GM12878 (cell line): ENCODE measurements at regions of chr7 and their contacts with region 1.

Region 1: DNA sequence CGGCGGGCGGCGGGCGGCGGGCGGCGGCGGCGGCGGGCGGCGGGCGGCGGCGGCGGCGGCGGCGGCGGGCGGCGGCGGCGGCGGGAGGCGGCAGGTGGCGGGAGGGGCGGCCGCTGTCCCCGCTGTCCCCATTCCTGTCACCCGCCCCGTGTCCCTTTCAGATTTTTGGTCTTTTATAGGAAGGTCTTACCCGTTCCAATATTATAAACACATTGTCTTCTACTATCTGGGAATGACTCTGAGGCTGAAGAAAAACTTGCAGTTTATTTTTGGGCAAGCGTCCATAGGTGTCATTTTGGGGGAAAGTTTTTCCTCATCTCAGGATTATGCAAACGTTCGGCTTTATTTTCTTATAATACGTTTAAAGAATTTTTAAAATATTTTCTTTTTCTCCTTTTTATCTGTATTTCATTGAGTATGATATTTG is 578 bp downstream of the ZNF713 start:
- DNase-seq: no peak
- ATAC-seq: no peak
- H3K4me3 ChIP-seq: peak overlapping the region; percentile 57; the same call in 1 of the 2 replicates
- H3K27ac ChIP-seq: no peak overlapping the region
- H3K4me1 ChIP-seq: no peaks in the 10 kb centered on the region
- H3K27me3 ChIP-seq: no peaks in the 10 kb centered on the region
- CTCF ChIP-seq: no peak
- EP300 ChIP-seq: no peak
- POLR2A ChIP-seq: no peak
- RAD21 ChIP-seq: no peak

Region 2: GRCh38 chr7:54758702-54759592 is 1128.9 kb before region 1 on chr7 and contains the start of gene SEC61G:
- CTCF ChIA-PET with region 1: no interaction called
- POLR2A ChIA-PET with region 1: no interaction called
- RAD21 ChIA-PET with region 1: no interaction called
- SMC1A ChIA-PET with region 1: no interaction called
- in situ Hi-C with region 1: loop called (anchors 25 kb)
- intact Hi-C with region 1: no loop called
- DNase-seq: peak; percentile 90
- ATAC-seq: peak; percentile 96
- H3K4me3 ChIP-seq: peak within 1 kb of the TSS; percentile 97
- H3K27ac ChIP-seq: peak within 1 kb of the TSS; percentile 78
- H3K4me1 ChIP-seq: no peaks in the 10 kb centered on the region
- H3K27me3 ChIP-seq: no peaks in the 10 kb centered on the region
- CTCF ChIP-seq: no peak
- EP300 ChIP-seq: no peak
- POLR2A ChIP-seq: peak; percentile 92
- RAD21 ChIP-seq: no peak
- polyA plus RNA-seq, gene SEC61G: 709 to 809 TPM

Region 3: DNA sequence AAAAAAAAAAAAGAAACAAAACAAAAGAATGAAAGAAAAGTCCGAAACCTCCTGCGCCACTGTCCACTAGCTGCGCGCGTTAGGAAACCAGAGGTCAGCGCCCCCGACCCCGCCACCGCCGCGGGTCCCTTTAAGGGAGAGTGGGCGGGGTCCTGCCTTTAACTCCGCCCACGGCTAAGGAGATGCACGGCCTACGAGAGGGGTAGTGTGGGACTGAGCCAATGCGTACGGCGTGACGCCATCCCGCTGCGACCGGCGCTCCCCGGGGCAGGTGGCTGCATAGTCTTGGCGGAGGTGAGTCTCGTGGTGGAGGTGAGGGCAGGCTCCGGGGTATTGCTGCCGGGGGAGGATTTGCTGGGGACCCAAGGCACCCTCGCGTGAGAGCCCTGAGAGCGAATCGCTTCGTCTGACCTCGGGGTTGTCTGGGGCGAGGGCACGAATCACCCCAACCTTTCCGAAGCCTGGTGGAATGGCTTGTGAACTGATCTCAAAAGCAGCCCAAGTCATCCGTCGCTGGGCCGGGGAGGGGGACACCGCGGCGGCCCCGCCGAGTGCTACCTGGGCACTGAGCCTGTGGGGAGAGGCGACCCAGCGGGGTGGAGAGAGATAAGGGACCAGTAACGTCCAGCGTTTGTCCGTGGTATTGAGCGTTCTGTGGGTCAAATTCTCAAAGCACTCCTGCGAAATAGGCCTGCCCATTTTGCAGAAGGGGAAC is 64.0 kb after region 1 on chr7 and contains the start of gene MRPS17:
- CTCF ChIA-PET with region 1: no interaction called
- POLR2A ChIA-PET with region 1: no interaction called
- RAD21 ChIA-PET with region 1: no interaction called
- SMC1A ChIA-PET with region 1: no interaction called
- in situ Hi-C with region 1: no loop called
- intact Hi-C with region 1: loop called (anchors 2 kb)
- DNase-seq: peak; percentile 72
- ATAC-seq: peak; percentile 100
- H3K4me3 ChIP-seq: peak within 1 kb of the TSS; percentile 97
- H3K27ac ChIP-seq: peak within 1 kb of the TSS; percentile 87
- H3K4me1 ChIP-seq: no peaks in the 10 kb centered on the region
- H3K27me3 ChIP-seq: no peaks in the 10 kb centered on the region
- CTCF ChIP-seq: no peak
- EP300 ChIP-seq: no peak
- POLR2A ChIP-seq: peak; percentile 99
- RAD21 ChIP-seq: no peak
- polyA plus RNA-seq, gene MRPS17: 72.9 to 74.5 TPM